ENCODE measurements at regions of chr9 and their contacts with region 1.

Region 1: GRCh38 chr9:89497978-89498851 is at the start of gene SEMA4D:
- DNase-seq: peak; percentile 67
- ATAC-seq: peak; percentile 3
- H3K4me3 Mint-ChIP-seq: peak within 1 kb of the TSS; percentile 90
- H3K27ac Mint-ChIP-seq: peak within 1 kb of the TSS; percentile 96
- H3K4me1 Mint-ChIP-seq: peaks cover 71% of the 10 kb centered on the region
- H3K27me3 Mint-ChIP-seq: no peaks in the 10 kb centered on the region
- total RNA-seq, gene SEMA4D: 370 to 391 TPM

Region 2: DNA sequence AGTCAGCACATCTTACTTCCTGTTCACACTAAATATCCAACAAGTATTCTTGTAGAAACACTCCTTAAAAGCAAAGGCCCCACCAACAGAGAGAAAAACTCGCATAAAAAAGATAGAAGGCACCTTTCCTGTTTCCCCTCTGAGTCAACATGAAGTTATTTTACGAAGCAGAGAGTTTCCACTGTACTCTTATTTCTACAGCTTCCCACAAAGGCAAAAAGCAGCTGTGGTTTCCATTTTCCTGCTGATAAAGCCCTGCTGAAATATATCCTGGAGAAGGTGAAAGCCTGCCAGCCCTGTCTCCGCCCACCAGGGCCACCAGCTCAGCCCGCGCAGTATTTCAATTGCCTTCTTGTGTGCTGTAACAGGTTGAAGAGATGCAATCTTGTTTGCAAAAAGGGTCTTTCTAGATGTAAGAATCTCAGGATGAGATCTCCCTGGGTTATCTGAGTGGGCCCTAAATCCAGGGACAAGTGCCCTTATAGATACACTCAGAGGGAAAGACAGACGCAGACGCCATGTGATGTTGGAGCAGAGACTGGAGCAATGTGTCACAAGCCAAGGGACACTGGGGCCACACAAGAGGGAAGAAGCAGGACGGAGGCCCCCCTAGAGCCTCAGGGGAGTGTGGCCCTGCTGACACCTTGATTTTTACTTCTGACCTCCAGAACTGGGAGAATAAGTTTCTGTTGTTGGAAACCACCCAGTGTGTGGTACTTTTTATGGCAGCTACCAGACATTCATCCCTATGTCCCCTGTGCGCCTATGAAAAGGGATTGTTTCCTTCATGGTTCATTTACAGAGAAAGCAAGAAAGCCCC is 20.2 kb before region 1 on chr9:
- POLR2A ChIA-PET with region 1: interaction called, 19 read pairs
- DNase-seq: peak; percentile 47
- ATAC-seq: peak; percentile 29
- H3K4me3 Mint-ChIP-seq: peak overlapping the region; percentile 82
- H3K27ac Mint-ChIP-seq: peak overlapping the region; percentile 96
- H3K4me1 Mint-ChIP-seq: peaks cover 80% of the 10 kb centered on the region
- H3K27me3 Mint-ChIP-seq: no peaks in the 10 kb centered on the region

Region 3: GRCh38 chr9:89483592-89484522 is 14.4 kb before region 1 on chr9:
- POLR2A ChIA-PET with region 1: interaction called, 19 read pairs
- DNase-seq: peak; percentile 77
- ATAC-seq: peak; percentile 74
- H3K4me3 Mint-ChIP-seq: peak overlapping the region; percentile 86
- H3K27ac Mint-ChIP-seq: peak overlapping the region; percentile 93
- H3K4me1 Mint-ChIP-seq: peaks cover 82% of the 10 kb centered on the region
- H3K27me3 Mint-ChIP-seq: no peaks in the 10 kb centered on the region

Region 4: DNA sequence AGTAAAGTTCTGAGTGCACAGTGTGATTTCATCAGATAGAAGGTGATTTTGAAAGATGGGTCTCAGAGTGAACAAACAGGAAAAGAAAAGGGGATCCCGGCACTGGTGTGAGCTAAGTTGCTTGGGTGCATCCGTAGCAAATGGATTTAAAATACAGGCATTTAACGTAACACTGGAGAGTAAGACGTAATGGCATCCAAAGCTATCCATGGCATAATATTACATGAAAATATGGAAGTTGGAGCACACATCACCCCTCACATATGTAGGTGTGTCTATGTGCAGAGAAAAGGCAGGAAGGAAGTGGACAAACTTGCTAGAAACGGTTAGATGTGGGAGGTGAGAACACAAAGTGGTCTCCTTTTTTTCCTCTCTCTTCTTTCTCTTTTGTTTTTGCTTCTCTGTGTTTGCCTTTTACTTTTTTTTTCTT is 37.9 kb after region 1 on chr9:
- POLR2A ChIA-PET with region 1: interaction called, 10 read pairs
- DNase-seq: no peak
- ATAC-seq: peak; percentile 75
- H3K4me3 Mint-ChIP-seq: peak overlapping the region; percentile 76
- H3K27ac Mint-ChIP-seq: peak overlapping the region; percentile 88
- H3K4me1 Mint-ChIP-seq: peaks cover 82% of the 10 kb centered on the region
- H3K27me3 Mint-ChIP-seq: no peaks in the 10 kb centered on the region

Region 5: DNA sequence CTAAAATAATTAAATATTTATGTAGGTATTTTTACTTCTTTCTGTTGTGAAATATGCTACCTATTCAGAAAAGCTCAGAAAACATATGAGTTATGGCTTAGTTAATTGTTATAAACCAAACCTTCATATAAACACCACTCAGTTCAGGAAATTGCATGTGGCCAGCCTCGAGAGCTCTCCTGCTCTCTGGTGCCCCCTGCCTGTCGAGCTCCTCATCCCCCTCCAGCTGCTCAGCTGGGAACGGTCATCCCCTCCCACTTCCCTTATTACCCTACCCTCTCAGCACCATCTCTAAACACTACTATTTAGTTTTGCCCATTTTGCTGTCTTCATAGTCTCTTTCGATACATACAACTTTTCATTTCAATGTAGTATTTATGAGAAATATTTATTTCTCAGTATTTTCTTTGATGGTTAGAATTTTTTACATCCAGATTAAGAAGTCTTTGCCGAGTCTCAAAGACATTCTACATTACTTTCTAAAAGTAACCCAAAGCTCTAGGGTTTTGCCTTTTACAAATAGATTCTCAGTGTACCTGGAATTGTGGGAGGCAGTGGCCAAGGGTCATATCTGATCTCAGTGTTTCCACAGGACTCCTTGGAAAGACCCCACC is 50.9 kb after region 1 on chr9:
- POLR2A ChIA-PET with region 1: interaction called, 13 read pairs
- DNase-seq: peak; percentile 88
- ATAC-seq: peak; percentile 96
- H3K4me3 Mint-ChIP-seq: no peak overlapping the region
- H3K27ac Mint-ChIP-seq: peak overlapping the region; percentile 46
- H3K4me1 Mint-ChIP-seq: peaks cover 15% of the 10 kb centered on the region
- H3K27me3 Mint-ChIP-seq: peaks cover 7% of the 10 kb centered on the region

Region 6: GRCh38 chr9:89654859-89655689 is 156.9 kb after region 1 on chr9:
- POLR2A ChIA-PET with region 1: no interaction called
- DNase-seq: no peak
- ATAC-seq: no peak
- H3K4me3 Mint-ChIP-seq: no peak overlapping the region
- H3K27ac Mint-ChIP-seq: peak overlapping the region; percentile 47
- H3K4me1 Mint-ChIP-seq: peaks cover 34% of the 10 kb centered on the region
- H3K27me3 Mint-ChIP-seq: peaks cover 34% of the 10 kb centered on the region

Measured in activated naive CD8-positive, alpha-beta T cell treated with anti-CD3 and anti-CD28 coated beads, Interleukin-2, amount 10 ng/mL, durations not matched to agents 7 days and 5 days (primary cell).